H1 (cell line): ENCODE measurements at regions of chr11 and their contacts with region 1.

Region 1: GRCh38 chr11:103338621-103339484 is 229.6 kb downstream of the DYNC2H1 start:
- DNase-seq: peak; percentile 39 to 50
- H3K4me3 ChIP-seq: no peak overlapping the region
- H3K27ac ChIP-seq: no peak overlapping the region
- H3K4me1 ChIP-seq: peaks cover 0 to 4% (median 1%) of the 10 kb centered on the region in 4 experiments; a peak in 3 of 7 replicates
- H3K27me3 ChIP-seq: no peaks in the 10 kb centered on the region
- CTCF ChIP-seq: peak; percentile 58 to 71 (median 66)
- EP300 ChIP-seq: no peak
- POLR2A ChIP-seq: no peak
- RAD21 ChIP-seq: peak; percentile 81 to 85

Region 2: GRCh38 chr11:103326070-103326794 is 12.6 kb before region 1 on chr11:
- CTCF ChIA-PET with region 1: interaction called, 13 read pairs
- POLR2A ChIA-PET with region 1: no interaction called
- DNase-seq: peak; percentile 41 to 65
- H3K4me3 ChIP-seq: peak overlapping the region in 1 of 4 experiments; percentile 14; a peak in 2 of 8 replicates
- H3K27ac ChIP-seq: no peak overlapping the region
- H3K4me1 ChIP-seq: peaks cover 0 to 10% (median 3%) of the 10 kb centered on the region in 4 experiments; a peak in 4 of 7 replicates
- H3K27me3 ChIP-seq: no peaks in the 10 kb centered on the region
- CTCF ChIP-seq: peak in 2 of 3 experiments; percentile 62 to 80; a peak in 3 of 4 replicates
- EP300 ChIP-seq: no peak; a peak in 1 of 3 replicates
- POLR2A ChIP-seq: no peak
- RAD21 ChIP-seq: peak; percentile 74